Posterior cingulate gyrus (tissue), 11 donors: ENCODE measurements at regions of chr11 and their contacts with region 1.

Region 1: GRCh38 chr11:45655347-45655756 is 10.1 kb downstream of the CHST1 start:
- DNase-seq: peak; percentile 70 to 97 (median 85)

Region 2: GRCh38 chr11:45110562-45110961 is 544.8 kb before region 1 on chr11:
- intact Hi-C with region 1: no loop called
- DNase-seq: peak in 1 of 10 donors; percentile 41

Region 3: DNA sequence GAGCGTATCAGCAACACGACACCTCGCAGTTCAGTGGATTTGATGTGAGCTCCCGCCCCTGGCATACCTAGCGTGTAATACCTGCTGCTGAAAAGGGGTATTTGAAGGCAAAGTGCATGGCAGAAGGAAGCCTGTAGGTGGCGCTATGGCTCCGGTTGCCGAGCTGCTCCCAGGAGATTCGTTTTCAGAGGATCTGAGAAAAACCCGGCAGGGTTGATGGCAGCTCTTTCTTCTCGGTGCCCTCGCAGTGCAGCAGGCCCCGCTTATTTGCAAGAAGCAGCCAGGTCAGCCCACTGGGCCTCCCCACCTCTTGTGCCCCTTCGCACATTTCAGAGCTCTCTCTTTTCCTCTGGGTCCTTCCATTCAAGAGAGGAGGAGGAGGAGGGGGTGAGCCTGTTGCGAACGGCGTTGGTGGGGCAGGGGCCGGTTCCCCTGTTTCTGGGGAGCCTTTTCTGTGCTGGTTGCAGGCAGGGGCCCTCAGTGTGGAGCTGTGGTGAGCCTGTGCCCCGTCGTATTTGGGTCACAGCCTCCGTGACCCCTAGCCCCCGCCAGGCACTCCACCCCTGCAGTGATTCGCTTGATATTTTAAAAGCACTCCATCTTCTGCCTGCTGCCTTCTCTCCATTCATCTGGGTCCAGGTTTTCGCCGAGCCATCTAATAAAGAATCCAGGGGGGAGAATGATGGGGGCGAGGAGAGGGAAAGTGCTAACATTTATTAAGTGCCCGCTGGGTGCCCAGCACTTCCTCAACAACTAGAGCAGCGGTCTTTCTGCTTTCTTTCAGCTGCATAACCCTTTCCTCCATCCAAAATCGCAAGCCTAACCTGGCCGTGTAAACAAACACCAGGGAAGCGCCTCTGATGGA is 283.9 kb before region 1 on chr11:
- intact Hi-C with region 1: loop called (anchors 2 kb)
- DNase-seq: peak; percentile 70 to 96 (median 82)

Region 4: GRCh38 chr11:45543808-45544422 is 111.4 kb before region 1 on chr11:
- intact Hi-C with region 1: loop called (anchors 10 kb)
- DNase-seq: peak in 1 of 10 donors; percentile 63